ENCODE measurements at regions of chr2 and their contacts with region 1.

Region 1: GRCh38 chr2:68282811-68283418 is 30.6 kb upstream of the PPP3R1 start:
- DNase-seq: peak; percentile 33
- H3K4me3 ChIP-seq: no peak overlapping the region
- H3K27ac ChIP-seq: no peak overlapping the region
- H3K4me1 ChIP-seq: peaks cover 19% of the 10 kb centered on the region
- H3K27me3 ChIP-seq: no peaks in the 10 kb centered on the region
- CTCF ChIP-seq: peak; percentile 83

Region 2: DNA sequence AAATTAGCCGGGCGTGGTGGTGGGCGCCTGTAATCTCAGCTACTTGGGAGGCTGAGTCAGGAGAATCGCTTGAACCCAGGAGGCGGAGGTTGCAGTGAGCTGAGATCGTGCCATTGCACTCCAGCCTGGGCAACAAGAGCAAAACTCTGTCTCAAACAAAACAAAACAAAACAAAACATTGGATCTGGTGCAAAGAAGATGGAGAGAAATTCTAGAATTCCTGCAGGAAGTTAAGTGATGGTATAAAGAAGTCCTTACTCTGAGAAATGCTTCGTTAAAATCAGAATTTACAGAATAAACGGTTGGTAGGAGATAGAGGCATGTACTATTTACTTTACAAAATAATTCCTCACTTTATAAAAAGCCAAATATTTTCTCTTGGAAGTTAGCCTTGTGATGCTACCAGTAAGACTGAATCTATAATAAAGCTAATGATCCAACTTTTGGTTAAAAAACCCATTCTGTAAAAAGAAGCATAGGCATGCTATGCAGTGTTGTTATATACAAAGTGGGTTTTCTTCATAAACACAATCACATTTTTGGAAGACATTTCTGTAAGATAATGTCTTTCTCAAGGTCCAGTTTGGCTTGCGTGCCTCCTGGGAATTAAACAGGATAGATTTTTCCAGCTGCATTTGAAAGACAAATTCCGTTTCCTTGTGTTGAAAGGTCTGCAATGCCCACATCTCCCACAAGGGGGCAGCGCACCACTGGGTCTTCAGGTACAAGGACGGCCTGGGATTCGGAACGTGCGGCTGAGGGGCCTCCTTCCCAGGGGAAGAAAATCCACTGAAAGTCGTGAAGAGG is 160.8 kb before region 1 on chr2:
- CTCF ChIA-PET with region 1: interaction called, 6 read pairs
- POLR2A ChIA-PET with region 1: no interaction called
- intact Hi-C with region 1: loop called (anchors 5 kb)
- DNase-seq: peak; percentile 90
- H3K4me3 ChIP-seq: no peak overlapping the region
- H3K27ac ChIP-seq: no peak overlapping the region
- H3K4me1 ChIP-seq: no peaks in the 10 kb centered on the region
- H3K27me3 ChIP-seq: no peaks in the 10 kb centered on the region
- CTCF ChIP-seq: peak; percentile 96

Region 3: GRCh38 chr2:68196120-68196716 is 86.7 kb before region 1 on chr2:
- CTCF ChIA-PET with region 1: interaction called, 3 read pairs
- POLR2A ChIA-PET with region 1: no interaction called
- intact Hi-C with region 1: loop called (anchors 5 kb)
- DNase-seq: peak; percentile 75
- H3K4me3 ChIP-seq: no peak overlapping the region
- H3K27ac ChIP-seq: no peak overlapping the region
- H3K4me1 ChIP-seq: peaks cover 21% of the 10 kb centered on the region
- H3K27me3 ChIP-seq: no peaks in the 10 kb centered on the region
- CTCF ChIP-seq: peak; percentile 88

Measured in A673 (cell line).